ENCODE measurements at regions of chr6 and their contacts with region 1.

Region 1: DNA sequence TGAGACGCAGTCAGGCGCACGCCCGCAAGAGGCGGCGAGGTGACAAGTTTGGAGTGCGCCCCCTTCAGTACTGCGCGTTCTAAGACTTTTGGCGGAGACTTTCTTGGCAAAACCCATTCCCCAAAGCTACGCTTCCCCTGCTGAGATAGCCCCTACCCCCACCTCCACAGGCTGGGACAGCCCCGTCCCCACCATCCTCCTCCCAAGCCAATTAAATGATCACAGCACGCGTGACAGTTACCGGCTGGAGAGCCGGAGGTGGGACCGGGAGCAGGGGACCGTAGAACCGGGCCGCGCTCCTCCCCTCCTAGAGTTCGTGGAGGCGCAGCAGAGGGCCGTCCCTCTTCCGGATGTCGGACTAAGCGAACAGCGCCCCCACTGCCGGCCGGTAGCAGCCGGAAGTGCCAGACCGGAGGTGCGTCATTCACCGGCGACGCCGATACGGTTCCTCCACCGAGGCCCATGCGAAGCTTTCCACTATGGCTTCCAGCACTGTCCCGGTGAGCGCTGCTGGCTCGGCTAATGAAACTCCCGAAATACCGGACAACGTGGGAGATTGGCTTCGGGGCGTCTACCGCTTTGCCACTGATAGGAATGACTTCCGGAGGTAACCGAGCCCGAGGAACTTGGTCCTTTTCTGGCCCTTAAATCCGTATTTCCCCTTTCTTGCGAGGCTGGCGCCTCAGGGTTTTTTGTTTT is at the start of gene TOMM6:
- DNase-seq: peak; percentile 97
- ATAC-seq: peak; percentile 86
- H3K4me3 Mint-ChIP-seq: peak within 1 kb of the TSS; percentile 93
- H3K27ac Mint-ChIP-seq: peak within 1 kb of the TSS; percentile 98
- H3K4me1 Mint-ChIP-seq: peaks cover 22% of the 10 kb centered on the region
- H3K27me3 Mint-ChIP-seq: peaks cover 8% of the 10 kb centered on the region
- total RNA-seq, gene TOMM6: 215 to 218 TPM

Region 2: GRCh38 chr6:41675176-41675770 is 112.1 kb before region 1 on chr6:
- CTCF ChIA-PET with region 1: no interaction called
- POLR2A ChIA-PET with region 1: no interaction called
- DNase-seq: no peak
- ATAC-seq: no peak
- H3K4me3 Mint-ChIP-seq: no peak overlapping the region
- H3K27ac Mint-ChIP-seq: no peak overlapping the region
- H3K4me1 Mint-ChIP-seq: no peaks in the 10 kb centered on the region
- H3K27me3 Mint-ChIP-seq: peaks cover 4% of the 10 kb centered on the region

Region 3: GRCh38 chr6:41705996-41706835 is 81.2 kb before region 1 on chr6:
- CTCF ChIA-PET with region 1: interaction called, 22 read pairs
- POLR2A ChIA-PET with region 1: no interaction called
- DNase-seq: peak; percentile 84
- ATAC-seq: peak; percentile 87
- H3K4me3 Mint-ChIP-seq: no peak overlapping the region
- H3K27ac Mint-ChIP-seq: peak overlapping the region; percentile 93
- H3K4me1 Mint-ChIP-seq: peaks cover 41% of the 10 kb centered on the region
- H3K27me3 Mint-ChIP-seq: no peaks in the 10 kb centered on the region

Region 4: GRCh38 chr6:41775293-41776181 is 11.8 kb before region 1 on chr6:
- CTCF ChIA-PET with region 1: interaction called, 23 read pairs
- POLR2A ChIA-PET with region 1: interaction called, 7 read pairs
- DNase-seq: peak; percentile 69
- ATAC-seq: peak; percentile 48
- H3K4me3 Mint-ChIP-seq: no peak overlapping the region
- H3K27ac Mint-ChIP-seq: no peak overlapping the region
- H3K4me1 Mint-ChIP-seq: peaks cover 9% of the 10 kb centered on the region
- H3K27me3 Mint-ChIP-seq: peaks cover 2% of the 10 kb centered on the region

Region 5: DNA sequence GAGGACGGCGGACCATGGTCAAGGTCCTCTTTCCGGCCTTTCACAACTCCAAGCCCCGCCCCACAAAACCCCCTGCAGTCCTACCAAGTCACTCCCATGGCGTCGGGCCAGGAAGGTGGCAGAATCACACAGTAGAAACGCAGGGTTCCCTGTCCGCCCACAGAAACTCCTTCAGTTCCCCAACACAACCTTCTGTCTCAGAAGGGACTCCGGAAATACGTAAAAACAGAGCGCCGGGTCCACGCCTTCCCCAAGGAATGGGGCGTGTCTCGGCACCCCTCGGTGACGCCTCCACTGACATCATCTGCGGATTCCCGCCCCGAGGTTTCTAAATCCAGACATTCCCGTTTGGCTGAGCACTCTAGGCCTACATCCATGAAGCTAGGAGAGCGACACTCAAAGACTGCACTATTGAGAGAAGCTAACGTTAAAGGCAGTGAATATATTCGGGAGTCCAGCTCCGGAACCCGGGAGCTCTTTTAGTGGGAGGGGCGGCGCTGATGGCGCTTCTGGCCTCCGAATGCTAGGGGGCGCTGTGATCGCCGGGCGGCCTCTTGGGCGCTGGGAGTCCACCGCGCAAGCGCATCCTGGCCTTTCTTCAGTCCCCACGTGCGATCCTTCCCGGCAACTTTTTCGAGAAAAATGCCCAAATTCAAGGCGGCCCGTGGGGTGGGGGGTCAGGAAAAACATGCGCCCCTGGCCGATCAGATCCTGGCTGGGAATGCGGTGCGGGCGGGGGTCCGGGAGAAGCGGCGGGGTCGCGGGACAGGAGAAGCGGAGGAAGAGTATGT is 133.7 kb after region 1 on chr6 and contains the starts of genes BYSL and MED20:
- CTCF ChIA-PET with region 1: interaction called, 44 read pairs
- POLR2A ChIA-PET with region 1: interaction called, 6 read pairs
- DNase-seq: peak; percentile 95
- ATAC-seq: peak; percentile 90
- H3K4me3 Mint-ChIP-seq: peak within 1 kb of the TSS; percentile 98
- H3K27ac Mint-ChIP-seq: peak within 1 kb of the TSS; percentile 98
- H3K4me1 Mint-ChIP-seq: peaks cover 52% of the 10 kb centered on the region
- H3K27me3 Mint-ChIP-seq: no peaks in the 10 kb centered on the region
- total RNA-seq, gene BYSL: 39.4 to 43.1 TPM
- total RNA-seq, gene MED20: 20.6 to 22.3 TPM

Region 6: DNA sequence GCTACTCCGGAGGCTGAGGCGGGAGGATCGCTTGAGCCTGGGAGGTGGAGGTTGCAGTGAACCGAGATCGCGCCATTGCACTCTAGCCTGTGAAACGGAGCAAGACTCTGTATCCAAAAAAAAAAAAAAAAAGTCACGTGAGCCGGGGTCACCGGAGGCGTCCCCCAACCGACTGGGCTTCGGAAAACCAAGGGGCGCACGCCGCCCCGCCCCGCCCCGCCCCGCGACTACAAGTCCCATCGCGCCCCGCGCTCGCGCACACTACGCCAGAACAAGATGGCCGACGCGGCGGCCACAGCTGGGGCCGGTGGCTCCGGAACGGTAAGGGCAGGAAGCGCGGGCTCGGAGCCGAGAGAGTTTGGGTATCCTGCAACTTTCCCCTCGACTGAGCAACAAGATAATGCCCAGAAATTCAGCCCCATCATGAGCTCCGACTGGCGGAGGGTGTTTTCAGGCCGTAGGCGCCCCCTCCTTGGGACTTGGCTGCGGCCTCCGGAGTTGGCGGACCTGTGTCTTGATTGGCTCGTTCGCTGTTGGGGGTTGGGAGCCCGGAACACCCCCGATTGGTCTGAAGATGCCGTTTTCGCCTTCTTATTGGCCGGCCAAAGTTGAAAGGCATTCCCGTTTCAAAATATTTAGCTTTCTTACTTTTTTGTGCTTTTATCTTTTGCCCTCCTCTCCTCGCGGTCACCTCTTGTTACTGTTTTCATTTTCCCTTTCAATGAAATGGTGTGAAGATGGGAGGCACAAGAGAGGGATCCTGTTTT is 263.1 kb after region 1 on chr6 and contains the start of gene TAF8:
- CTCF ChIA-PET with region 1: interaction called, 286 read pairs
- POLR2A ChIA-PET with region 1: interaction called, 18 read pairs
- DNase-seq: peak; percentile 95
- ATAC-seq: peak; percentile 81
- H3K4me3 Mint-ChIP-seq: peak within 1 kb of the TSS; percentile 95
- H3K27ac Mint-ChIP-seq: peak within 1 kb of the TSS; percentile 99
- H3K4me1 Mint-ChIP-seq: peaks cover 67% of the 10 kb centered on the region
- H3K27me3 Mint-ChIP-seq: no peaks in the 10 kb centered on the region
- total RNA-seq, gene TAF8: 44.1 TPM